Psoas muscle (tissue), 8 donors: ENCODE measurements at regions of chr22 and their contacts with region 1.

Region 1: GRCh38 chr22:39080052-39080762 is 3.1 kb downstream of the APOBEC3G start:
- DNase-seq: peak in 1 of 2 donors; percentile 15
- ATAC-seq: no peak
- H3K4me3 ChIP-seq: no peak overlapping the region
- H3K27ac ChIP-seq: no peak overlapping the region
- H3K4me1 ChIP-seq: no peaks in the 10 kb centered on the region
- H3K27me3 ChIP-seq: peaks cover 0 to 2% (median 0%) of the 10 kb centered on the region in 3 donors
- CTCF ChIP-seq: no peak

Region 2: DNA sequence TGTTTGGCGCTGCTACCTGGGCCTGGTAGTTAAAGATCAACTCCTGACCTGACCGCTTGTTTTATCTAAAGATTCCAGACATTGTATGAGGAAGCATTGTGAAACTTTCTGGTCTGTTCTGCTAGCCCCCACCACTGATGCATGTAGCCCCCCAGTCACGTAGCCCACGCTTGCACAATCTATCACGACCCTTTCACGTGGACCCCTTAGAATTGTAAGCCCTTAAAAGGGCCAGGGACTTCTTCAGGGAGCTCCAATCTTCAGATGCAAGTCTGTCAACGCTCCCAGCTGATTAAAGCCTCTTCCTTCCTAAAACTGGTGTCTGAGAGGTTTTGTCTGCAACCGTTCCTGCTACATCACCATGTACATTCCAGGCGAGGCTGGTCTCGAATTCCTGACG is 24.5 kb before region 1 on chr22:
- intact Hi-C with region 1: no loop called
- DNase-seq: no peak
- ATAC-seq: no peak
- H3K4me3 ChIP-seq: no peak overlapping the region
- H3K27ac ChIP-seq: no peak overlapping the region
- H3K4me1 ChIP-seq: no peaks in the 10 kb centered on the region
- H3K27me3 ChIP-seq: peaks cover 0 to 20% (median 3%) of the 10 kb centered on the region in 3 donors
- CTCF ChIP-seq: no peak

Region 3: DNA sequence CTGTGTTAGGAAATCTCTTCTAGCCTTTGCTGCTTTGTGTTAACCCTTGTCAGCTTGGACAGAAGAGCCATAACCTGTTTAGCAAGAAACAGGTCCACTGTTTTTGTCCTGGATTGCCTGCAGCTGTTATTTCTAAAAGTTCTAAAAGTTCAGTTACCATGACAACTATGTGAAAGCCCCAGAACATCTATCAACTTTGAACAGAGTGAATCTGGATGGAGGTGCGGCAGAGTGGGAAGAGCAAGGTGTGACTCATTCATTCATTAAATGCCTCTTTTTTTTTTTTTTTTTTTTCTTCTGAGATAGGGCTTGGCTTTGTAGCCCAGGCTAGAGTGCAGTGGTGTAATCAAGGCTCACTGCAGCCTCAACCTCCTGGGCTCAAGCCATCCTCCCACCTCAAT is 1921.5 kb after region 1 on chr22:
- intact Hi-C with region 1: loop called in 1 of 2 experiments (anchors 5 kb)
- DNase-seq: no peak
- ATAC-seq: no peak
- H3K4me3 ChIP-seq: no peak overlapping the region
- H3K27ac ChIP-seq: no peak overlapping the region
- H3K4me1 ChIP-seq: no peaks in the 10 kb centered on the region
- H3K27me3 ChIP-seq: no peaks in the 10 kb centered on the region
- CTCF ChIP-seq: no peak